ENCODE measurements at regions of chr1 and their contacts with region 1.

Region 1: DNA sequence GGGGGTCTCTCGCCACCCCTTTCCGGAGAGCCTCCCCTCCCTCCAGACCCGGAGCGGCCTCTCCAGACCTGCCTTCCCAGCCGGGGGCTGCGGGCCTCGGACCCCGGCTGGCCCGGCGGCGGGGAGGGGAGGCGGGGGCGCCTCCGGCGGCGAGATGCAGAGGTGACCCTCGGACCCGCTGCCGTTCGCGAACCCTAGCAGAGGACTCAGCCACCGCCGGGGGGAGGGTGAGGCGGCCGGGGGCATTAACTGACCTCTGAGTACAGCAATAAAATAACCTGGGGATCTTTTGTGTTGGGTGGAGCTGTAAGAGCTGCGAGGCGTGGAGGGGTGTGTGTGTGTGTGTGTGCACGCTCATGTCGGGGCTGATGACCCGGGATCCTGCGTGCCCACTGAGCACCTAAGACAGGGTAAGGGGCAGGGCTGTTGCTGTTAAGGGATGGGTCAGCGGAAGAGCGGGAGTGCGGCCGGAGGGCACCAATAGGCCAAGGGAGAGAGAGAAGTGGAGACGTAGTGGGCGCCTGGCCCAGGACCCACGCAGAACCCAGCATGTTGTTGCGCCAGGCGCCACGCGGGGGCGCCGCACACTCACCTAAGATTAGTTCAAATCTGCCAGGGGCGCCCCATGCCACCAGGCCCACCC is 6.3 kb downstream of the HAPLN2 start:
- DNase-seq: peak; percentile 75

Region 2: DNA sequence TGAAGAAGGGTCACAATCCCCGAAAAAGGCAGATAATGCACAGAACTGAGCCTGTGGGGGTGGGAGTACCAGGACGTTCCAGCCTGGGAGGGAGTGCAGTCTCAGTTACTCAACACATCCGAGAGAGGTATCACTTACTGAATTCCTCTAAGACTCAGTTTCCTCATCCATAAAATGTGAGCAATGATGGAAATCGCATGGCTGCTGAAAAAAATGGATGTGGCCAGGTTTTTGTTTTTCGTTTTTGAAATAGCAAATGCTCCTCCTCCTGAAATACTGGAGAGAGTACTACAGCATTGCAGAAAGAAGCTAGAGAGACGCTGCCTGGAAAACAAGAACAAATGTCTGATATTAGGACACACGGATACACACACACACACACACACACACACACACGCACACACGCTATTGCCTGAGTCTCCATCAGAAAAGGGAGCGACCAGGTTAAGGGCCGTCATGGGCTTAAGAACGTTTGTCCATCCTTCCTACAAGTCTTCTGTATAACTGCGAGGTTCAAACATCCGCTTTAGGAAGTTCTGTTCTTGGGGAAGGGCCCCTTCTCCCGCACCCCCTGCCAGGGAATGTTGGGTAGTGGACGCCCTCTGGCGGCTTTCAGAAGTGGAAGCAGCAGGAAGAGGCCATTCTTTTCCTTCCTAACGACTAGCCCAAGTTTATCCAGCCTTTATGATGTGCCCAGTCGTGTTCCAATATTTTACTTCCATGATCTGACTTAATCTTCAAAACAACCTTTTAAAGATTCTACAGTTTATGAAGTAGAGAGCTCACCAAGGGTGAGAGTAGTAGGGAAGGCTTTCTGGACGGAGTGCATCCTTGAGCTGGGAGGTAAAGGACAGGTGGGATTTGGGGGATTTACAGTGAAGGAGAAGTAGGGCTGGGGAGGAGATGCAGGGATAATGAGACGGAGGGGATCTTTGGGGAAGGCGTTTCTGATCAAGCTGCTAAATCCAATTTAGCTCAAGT is 52.3 kb after region 1 on chr1:
- intact Hi-C with region 1: loop called (anchors 1 kb)
- DNase-seq: no peak

Region 3: DNA sequence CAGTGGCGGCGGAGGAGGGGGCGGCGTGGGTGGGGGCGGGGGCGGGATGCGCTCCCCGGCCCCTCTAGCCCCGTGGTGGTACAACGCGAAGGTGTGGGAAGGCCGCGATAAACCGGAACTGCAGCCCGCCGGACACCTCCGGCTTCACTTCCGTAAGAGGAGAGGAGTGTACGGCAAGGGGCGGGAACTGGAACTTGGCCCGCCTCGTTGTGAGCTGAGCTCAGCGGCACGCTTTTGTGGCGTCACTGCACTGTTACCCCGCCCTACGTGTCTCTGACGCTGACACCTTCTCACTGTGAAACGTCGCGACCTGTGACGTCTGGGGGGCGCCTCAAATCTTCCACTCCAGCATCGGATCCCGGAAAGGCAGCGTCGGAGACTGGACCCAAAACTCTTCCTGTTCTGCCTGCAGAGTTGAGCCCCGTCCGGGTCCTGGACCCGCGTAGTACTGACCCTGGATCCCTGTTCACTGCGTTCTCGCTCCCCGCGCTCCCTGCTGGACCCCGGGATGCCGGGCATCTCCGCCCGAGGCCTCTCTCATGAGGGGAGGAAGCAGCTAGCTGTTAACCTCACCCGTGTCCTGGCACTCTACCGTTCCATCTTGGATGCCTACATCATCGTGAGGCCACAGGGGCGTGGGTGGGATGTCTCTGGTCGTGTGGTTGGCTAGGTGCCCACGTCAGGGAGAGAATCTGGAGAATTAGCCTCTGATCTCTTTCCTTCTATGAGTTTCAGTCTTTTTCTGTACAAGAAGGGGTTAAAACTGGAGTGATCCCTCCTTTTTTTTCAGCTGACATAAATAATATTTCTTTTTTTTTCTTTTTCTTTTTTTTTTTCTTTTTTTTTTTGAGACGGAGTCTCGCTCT is 103.3 kb after region 1 on chr1 and contains the start of gene ISG20L2:
- intact Hi-C with region 1: loop called (anchors 5 kb)
- DNase-seq: peak; percentile 98
- total RNA-seq, gene ISG20L2: 12.4 TPM

Region 4: DNA sequence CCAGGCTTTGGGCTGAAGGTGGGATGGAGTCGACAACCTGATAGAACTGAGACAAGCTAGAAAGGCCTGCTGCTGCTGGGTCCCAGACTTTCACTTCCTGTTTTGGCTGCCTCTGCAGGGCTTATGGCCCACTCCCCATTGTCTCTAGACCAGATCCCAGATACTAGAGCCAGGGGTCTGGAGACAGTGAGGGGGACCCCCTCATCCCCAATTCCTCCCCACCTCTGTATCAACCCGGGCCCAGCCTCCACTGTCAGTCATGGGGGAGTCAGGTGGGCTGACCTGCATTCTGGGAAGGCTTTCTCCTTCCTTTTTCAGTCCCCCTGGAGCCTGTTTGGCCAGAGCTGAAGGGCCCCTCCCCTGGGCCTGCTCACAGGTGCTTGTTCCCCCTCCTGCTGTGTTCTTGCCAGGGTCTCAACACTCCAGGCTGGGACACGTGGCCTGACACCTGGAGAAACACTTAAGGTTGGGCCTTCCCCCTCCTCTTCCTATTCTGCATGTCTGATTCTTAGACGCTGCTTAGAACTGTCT is 492.0 kb after region 1 on chr1:
- intact Hi-C with region 1: no loop called
- DNase-seq: no peak